Activated CD4-positive, alpha-beta T cell treated with anti-CD3 and anti-CD28 coated beads, Interleukin-2, amount 10 ng/mL, durations not matched to agents 24 days and 14 days (primary cell): ENCODE measurements at regions of chr11 and their contacts with region 1.

Region 1: DNA sequence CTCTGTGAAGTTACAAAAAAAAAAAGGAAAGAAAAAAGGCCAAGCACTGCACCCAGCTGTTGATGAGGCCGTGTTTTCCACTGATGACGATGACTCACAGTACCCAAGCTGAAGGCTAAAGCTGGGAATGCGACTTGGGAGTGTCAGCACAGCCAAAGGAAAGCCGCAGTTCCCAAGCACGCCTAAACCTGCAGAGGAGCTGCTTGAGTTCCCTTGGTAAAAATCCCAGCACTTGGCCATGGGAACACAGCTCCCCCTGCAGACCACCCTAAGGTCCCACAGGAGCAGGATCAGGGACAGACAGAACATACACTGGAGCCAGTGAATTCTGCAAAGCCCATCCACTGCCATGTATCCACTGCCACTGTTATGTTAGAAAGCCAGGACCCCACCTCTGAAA is 39.9 kb downstream of the SERGEF start:
- DNase-seq: no peak
- H3K4me3 Mint-ChIP-seq: no peak overlapping the region
- H3K27ac Mint-ChIP-seq: no peak overlapping the region
- H3K4me1 Mint-ChIP-seq: no peaks in the 10 kb centered on the region
- H3K27me3 Mint-ChIP-seq: no peaks in the 10 kb centered on the region

Region 2: DNA sequence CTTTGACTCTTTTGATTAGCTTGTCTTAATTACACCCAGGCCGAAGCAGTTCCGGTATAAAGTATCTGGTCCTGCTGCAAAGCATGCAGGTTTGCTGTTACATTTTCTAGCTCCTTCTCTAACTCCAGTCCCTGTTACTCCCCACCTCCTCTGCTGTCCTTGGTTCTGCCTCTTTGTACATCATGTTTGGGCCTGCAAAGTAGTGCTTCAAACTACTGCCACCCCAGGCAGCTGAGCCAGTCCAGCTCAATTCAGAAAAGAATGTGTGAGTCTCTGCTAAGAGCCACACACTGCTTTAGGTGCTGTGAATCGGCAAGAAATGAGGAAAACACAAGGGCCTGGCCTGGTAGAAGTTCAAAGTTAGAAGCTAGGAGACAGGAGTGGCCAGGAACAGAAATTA is 96.2 kb before region 1 on chr11:
- intact Hi-C with region 1: loop called (anchors 5 kb)
- DNase-seq: no peak
- H3K4me3 Mint-ChIP-seq: no peak overlapping the region
- H3K27ac Mint-ChIP-seq: no peak overlapping the region
- H3K4me1 Mint-ChIP-seq: no peaks in the 10 kb centered on the region
- H3K27me3 Mint-ChIP-seq: no peaks in the 10 kb centered on the region

Region 3: DNA sequence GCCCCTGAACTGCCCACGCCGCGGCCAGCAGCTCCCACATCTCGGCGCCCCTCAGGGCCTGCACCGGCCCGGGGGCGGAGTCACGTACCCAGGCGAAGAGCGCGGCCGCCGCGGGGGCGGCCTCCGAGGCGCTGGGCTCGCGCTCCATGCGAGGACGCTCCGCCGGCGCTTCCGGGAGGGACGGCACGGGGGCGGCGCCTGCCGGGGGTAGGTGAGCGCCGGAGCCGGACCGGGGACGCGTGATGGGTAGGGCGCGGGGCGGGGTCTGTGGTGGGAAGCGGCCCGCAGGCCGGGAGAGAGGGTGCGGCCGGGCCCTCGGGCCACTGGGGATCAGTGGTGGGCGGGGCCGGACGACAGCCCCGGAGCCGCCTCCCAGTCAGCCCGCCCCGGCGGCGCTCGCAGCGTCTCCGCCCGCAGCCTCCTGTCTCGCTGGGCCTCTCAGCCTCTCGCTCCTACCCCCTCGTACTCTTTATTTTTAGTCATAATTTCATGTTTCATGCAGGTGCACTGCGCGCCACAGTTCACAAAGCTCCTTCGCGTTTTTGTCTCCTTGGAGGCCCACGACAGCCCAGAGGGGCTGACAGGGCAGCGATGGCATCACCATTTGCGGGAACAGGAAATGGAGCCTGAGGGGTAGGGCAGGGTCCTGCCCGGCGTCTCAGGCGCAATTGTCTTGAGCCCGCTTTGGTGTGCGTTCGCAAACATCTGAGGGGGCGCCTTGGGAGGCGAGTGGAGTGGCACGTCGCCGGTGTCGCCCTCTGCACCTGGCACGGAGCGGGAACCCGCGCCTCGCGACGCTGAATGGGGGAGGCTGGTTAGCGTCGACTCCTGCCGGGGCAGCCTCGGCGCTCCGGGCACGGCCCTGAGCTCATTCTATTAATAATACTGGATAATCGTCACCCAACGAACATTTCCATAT is 40.1 kb after region 1 on chr11 and contains the start of gene SERGEF:
- intact Hi-C with region 1: no loop called
- DNase-seq: peak; percentile 98
- H3K4me3 Mint-ChIP-seq: peak within 1 kb of the TSS; percentile 90
- H3K27ac Mint-ChIP-seq: peak within 1 kb of the TSS; percentile 92
- H3K4me1 Mint-ChIP-seq: peaks cover 37% of the 10 kb centered on the region
- H3K27me3 Mint-ChIP-seq: peaks cover 3% of the 10 kb centered on the region
- total RNA-seq, gene SERGEF: 26.2 and 35.8 TPM in 2 replicates